Lower leg skin (tissue), 4 donors: ENCODE measurements at regions of chr19 and their contacts with region 1.

Region 1: DNA sequence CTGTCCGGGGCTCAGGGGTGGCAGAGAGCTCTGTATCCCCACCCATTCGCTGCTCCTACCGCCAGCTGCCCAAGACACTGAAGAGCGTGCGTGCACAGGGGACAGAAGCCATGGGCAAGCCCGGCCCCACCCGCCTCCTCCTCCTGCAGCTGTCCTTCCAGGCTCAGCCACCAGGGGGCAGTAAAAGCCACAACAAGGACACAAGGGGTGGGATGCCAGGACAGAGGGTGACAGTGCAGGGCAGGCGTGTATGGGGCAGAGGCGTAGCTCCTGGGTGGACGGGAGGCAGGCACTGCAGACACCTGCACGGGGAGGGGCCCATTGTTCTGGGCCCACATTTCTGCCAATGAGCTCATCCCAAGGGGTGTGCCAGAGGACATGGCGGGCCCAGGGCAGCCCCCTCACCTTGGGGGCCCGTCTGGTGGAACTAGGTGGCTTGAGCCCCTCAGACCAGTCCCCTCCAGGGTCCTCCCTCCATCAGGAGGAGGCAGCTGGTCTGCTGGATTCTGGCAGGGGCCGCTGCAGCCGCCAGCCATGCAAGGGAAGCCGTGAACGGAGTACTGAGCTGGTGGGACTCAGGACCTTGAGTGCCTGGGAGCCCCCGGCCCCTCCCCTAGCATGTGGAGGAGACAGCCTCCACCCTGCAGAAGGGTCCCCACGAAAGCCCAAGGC is 61.1 kb downstream of the MLLT1 start:
- DNase-seq: peak; percentile 86 to 98
- H3K4me3 ChIP-seq: no peak overlapping the region
- CTCF ChIP-seq: peak in 1 of 3 donors; percentile 72
- POLR2A ChIP-seq: no peak

Region 2: DNA sequence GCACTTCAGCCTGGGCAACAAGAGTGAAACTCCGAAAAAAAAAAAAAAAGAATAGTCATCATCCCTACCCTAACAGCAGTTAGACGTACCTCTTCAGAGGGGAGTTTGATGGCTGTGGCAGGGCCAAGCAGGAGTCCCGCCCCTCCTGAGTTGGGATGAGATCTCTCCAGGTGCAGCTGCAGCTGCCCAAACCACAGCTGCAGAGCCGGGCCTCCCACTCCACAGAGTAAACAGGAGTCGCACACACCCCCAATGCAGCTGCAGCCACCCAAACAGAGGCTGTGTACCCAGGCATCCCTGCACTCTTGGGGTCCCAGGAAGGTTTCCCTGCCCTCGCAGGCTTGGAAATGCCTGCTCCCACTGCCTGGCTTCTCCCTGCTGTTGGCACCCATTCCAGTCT is 78.6 kb after region 1 on chr19:
- intact Hi-C with region 1: loop called (anchors 5 kb)
- DNase-seq: no peak
- H3K4me3 ChIP-seq: no peak overlapping the region
- CTCF ChIP-seq: no peak
- POLR2A ChIP-seq: no peak